MCF 10A (cell line): ENCODE measurements at regions of chr19 and their contacts with region 1.

Region 1: DNA sequence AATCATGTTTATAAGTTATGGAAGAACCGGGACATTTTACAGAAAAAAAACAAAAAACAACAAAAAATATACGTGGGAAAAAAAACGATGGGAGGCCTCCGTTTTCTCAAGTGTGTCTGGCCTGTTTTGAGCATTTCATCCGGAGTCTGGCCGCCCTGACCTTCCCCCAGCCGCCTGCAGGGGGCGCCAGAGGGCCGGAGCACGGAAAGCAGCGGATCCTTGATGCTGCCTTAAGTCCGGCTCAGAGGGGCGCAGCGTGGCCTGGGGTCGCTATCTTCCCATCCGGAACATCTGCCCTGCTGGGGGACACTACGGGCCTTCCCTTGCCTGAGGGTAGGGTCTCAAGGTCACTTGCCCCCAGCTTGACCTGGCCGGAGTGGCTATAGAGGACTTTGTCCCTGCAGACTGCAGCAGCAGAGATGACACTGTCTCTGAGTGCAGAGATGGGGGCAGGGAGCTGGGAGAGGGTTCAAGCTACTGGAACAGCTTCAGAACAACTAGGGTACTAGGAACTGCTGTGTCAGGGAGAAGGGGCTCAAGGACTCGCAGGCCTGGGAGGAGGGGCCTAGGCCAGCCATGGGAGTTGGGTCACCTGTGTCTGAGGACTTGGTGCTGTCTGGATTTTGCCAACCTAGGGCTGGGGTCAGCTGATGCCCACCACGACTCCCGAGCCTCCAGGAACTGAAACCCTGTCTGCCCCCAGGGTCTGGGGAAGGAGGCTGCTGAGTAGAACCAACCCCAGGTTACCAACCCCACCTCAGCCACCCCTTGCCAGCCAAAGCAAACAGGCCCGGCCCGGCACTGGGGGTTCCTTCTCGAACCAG is 1.8 kb upstream of the APOE start:
- DNase-seq: peak; percentile 63
- H3K4me3 Mint-ChIP-seq: no peak overlapping the region
- H3K27ac Mint-ChIP-seq: no peak overlapping the region
- H3K4me1 Mint-ChIP-seq: peaks cover 7% of the 10 kb centered on the region
- H3K27me3 Mint-ChIP-seq: peaks cover 10% of the 10 kb centered on the region
- CTCF ChIP-seq: peak; percentile 97

Region 2: GRCh38 chr19:44890366-44891015 is 13.3 kb before region 1 on chr19:
- CTCF ChIA-PET with region 1: interaction called, 16 read pairs
- POLR2A ChIA-PET with region 1: interaction called, 3 read pairs
- intact Hi-C with region 1: no loop called
- DNase-seq: peak; percentile 100
- H3K4me3 Mint-ChIP-seq: peak overlapping the region; percentile 74
- H3K27ac Mint-ChIP-seq: peak overlapping the region; percentile 70
- H3K4me1 Mint-ChIP-seq: peaks cover 25% of the 10 kb centered on the region
- H3K27me3 Mint-ChIP-seq: no peaks in the 10 kb centered on the region
- CTCF ChIP-seq: no peak